ENCODE measurements at regions of chr4 and their contacts with region 1.

Region 1: DNA sequence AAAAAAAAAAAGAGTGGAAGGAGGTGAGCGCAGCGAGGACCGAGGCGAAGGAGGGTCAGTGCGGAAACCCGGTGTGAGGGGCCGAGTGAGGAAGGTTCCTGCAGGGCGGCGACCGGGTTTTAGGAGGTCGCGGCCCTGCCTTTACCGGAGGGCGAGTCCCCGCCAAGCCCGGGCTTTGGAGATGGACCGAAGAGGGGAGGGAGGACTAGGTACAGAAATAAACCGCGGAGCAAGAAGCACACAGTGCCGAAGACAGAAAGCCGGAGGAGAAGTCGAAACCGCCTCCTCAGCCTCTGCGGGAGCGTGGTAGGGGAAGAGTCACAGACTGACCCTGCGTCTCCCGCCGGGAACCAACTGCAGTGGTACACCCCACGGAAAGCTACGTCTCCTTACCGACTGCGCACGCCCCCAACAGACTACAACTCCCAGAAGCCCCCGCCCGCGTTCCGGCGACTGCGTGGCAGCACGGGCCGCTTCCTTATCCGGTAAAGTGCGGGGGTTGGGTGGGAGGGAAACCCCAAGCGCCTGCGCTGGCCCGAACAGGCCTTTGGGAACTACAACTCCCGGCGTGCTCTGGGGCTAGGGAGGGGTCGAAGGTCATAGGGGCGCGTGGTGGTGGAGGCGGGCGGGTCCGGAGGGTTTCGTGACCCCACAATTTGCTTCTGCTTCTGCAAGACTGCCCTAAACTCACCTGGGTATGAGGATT is at the start of gene NFXL1:
- DNase-seq: peak; percentile 94
- H3K4me3 Mint-ChIP-seq: peak within 1 kb of the TSS; percentile 90
- H3K27ac Mint-ChIP-seq: peak within 1 kb of the TSS; percentile 95
- H3K4me1 Mint-ChIP-seq: peaks cover 31% of the 10 kb centered on the region
- H3K27me3 Mint-ChIP-seq: no peaks in the 10 kb centered on the region
- total RNA-seq, gene NFXL1: 13.1 and 16.5 TPM in 2 replicates

Region 2: DNA sequence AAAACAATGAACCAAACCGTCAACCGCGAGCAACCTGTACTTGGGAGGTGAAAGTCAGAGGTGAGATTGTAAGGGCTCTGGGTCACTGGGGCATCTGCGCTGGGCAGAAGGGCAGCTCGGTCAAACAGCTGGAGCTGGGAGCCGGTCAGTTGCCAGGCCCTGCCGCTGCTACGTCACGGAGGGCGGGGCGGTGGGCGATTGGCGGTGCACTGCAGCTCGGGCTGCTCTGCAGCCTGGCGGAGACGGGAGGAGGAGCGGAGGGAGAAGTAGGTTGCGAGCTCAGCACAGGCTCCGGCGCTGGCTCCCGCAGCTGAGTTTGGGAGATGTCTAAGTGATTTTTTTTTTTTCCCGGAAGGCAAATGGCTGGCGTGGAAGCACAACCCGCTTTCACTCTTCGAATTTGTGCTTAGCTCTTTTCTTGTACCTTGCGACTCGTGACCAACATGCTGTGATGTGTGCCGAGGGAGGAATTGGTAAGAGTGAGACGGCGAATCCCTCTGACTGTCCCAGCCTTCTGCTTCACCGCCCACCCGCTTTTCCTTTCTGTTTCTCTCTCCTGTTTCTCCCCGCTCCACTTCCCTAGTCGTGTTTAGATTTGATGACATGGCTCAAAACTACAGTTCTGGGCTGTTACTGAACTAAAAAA is 429.2 kb before region 1 on chr4 and contains the start of gene ATP10D:
- intact Hi-C with region 1: loop called (anchors 5 kb)
- DNase-seq: peak; percentile 72
- H3K4me3 Mint-ChIP-seq: peak within 1 kb of the TSS; percentile 92
- H3K27ac Mint-ChIP-seq: peak within 1 kb of the TSS; percentile 51
- H3K4me1 Mint-ChIP-seq: peaks cover 27% of the 10 kb centered on the region
- H3K27me3 Mint-ChIP-seq: peaks cover 9% of the 10 kb centered on the region
- total RNA-seq, gene ATP10D: 1.6 and 1.9 TPM in 2 replicates

Region 3: GRCh38 chr4:47651231-47651630 is 263.1 kb before region 1 on chr4:
- intact Hi-C with region 1: no loop called
- DNase-seq: no peak
- H3K4me3 Mint-ChIP-seq: no peak overlapping the region
- H3K27ac Mint-ChIP-seq: no peak overlapping the region
- H3K4me1 Mint-ChIP-seq: no peaks in the 10 kb centered on the region
- H3K27me3 Mint-ChIP-seq: peaks cover 13% of the 10 kb centered on the region

Region 4: DNA sequence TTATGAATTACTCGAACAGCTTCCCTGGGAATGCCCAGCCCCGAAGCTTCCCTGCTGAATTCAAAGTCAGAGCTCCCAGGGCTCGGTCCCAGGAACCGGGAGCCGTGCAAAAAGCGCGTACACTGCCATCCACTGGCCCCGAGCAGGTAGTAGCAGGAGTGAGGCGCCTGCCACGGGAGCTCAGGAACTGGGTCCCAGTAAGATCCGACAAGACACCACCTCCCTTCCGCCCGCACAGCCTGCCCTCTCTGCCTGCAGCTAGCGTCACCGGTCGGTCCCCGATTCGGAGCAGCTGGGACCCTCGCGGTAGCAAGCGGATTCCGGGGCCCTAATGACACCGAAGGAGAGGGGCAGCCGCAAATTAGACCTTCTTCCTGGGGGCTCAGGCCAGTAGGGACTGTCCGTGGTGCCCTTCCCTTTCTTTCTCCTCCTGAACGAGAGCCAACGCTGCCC is 77.7 kb before region 1 on chr4:
- intact Hi-C with region 1: loop called (anchors 5 kb)
- DNase-seq: peak; percentile 29
- H3K4me3 Mint-ChIP-seq: peak overlapping the region; percentile 80
- H3K27ac Mint-ChIP-seq: no peak overlapping the region
- H3K4me1 Mint-ChIP-seq: peaks cover 28% of the 10 kb centered on the region
- H3K27me3 Mint-ChIP-seq: peaks cover 47% of the 10 kb centered on the region

Region 5: GRCh38 chr4:48016141-48017103 is 102.0 kb after region 1 on chr4 and contains the starts of genes CNGA1 and NIPAL1:
- intact Hi-C with region 1: loop called (anchors 2 kb)
- DNase-seq: peak; percentile 51
- H3K4me3 Mint-ChIP-seq: peak within 1 kb of the TSS; percentile 80
- H3K27ac Mint-ChIP-seq: peak within 1 kb of the TSS; percentile 48
- H3K4me1 Mint-ChIP-seq: peaks cover 12% of the 10 kb centered on the region
- H3K27me3 Mint-ChIP-seq: peaks cover 28% of the 10 kb centered on the region
- total RNA-seq, gene CNGA1: not detected in 2 replicates
- total RNA-seq, gene NIPAL1: 2.0 and 2.5 TPM in 2 replicates

Region 6: DNA sequence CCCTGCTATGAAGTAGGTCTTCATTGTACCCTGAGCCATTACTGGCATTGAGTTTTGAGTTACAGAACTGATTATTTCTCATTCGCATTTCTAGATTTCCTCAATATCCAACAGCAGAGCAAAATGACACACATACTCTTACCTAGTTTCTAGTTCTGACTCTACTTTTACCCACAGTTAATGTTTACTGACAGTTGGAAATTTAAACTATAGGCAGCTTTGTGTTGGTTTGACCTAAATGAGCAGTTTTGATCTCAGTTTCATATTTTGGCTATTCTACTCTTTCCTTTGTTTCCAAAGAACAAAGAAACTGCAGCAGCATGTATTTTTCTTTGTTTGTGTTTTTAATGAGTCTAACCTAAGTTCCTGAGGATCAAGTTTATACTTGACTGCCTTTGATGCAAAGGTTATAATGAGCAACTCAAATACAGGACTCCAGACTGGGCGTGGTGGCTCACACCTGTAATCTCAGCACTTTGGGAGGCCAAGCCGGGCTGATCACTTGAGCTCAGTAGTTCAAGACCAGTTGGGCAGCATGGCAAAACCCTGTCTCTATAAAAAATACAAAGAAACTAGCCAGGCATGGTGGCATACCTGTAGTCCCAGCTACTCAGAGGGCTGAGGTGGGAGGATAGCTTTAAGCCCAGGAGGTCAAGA is 189.2 kb after region 1 on chr4:
- intact Hi-C with region 1: loop called (anchors 1 kb)
- DNase-seq: no peak
- H3K4me3 Mint-ChIP-seq: no peak overlapping the region
- H3K27ac Mint-ChIP-seq: peak overlapping the region; percentile 63
- H3K4me1 Mint-ChIP-seq: peaks cover 24% of the 10 kb centered on the region
- H3K27me3 Mint-ChIP-seq: no peaks in the 10 kb centered on the region

Region 7: DNA sequence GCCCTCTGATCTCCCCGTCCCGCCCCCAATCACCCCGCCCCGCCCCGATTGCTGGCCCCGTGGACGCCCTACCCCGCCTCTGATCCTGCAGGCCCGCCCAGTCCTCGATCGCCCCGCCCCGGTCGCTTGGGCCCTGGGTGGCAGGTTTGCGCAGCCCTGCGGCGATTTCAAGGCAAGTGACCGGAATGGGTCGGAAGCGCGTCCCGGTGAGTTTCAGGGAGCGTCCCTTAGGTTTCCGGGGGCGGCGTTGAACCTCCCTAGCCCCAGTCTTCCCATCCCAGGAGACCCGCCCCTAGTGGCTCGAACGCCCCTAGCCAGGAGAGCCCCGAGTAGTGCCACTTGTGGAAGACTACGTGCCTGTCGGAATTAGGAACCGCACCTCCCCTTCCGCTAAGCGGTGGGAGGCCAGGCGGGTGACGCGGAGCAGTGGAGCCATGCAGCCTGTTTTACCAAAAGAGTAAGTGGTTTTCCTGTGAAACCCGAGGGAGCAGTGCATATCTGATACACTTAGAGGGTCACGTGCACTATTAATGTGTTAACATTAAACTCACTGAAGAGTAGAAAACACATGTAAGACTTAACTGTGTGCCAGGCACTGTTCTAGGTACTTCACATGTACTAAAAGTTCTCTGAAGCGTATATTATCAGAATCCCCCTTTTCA is 355.6 kb after region 1 on chr4:
- intact Hi-C with region 1: loop called (anchors 1 kb)
- DNase-seq: peak; percentile 78
- H3K4me3 Mint-ChIP-seq: peak overlapping the region; percentile 89
- H3K27ac Mint-ChIP-seq: peak overlapping the region; percentile 74
- H3K4me1 Mint-ChIP-seq: peaks cover 16% of the 10 kb centered on the region
- H3K27me3 Mint-ChIP-seq: no peaks in the 10 kb centered on the region

Region 8: GRCh38 chr4:48594180-48594579 is 679.8 kb after region 1 on chr4:
- intact Hi-C with region 1: no loop called
- DNase-seq: no peak
- H3K4me3 Mint-ChIP-seq: no peak overlapping the region
- H3K27ac Mint-ChIP-seq: no peak overlapping the region
- H3K4me1 Mint-ChIP-seq: peaks cover 3% of the 10 kb centered on the region
- H3K27me3 Mint-ChIP-seq: no peaks in the 10 kb centered on the region

Region 9: GRCh38 chr4:48830706-48831531 is 916.5 kb after region 1 on chr4 and contains the start of gene OCIAD1:
- intact Hi-C with region 1: loop called (anchors 5 kb)
- DNase-seq: peak; percentile 94
- H3K4me3 Mint-ChIP-seq: peak within 1 kb of the TSS; percentile 99
- H3K27ac Mint-ChIP-seq: peak within 1 kb of the TSS; percentile 100
- H3K4me1 Mint-ChIP-seq: peaks cover 26% of the 10 kb centered on the region
- H3K27me3 Mint-ChIP-seq: peaks cover 2% of the 10 kb centered on the region
- total RNA-seq, gene OCIAD1: 120 and 122 TPM in 2 replicates